ENCODE measurements at regions of chr2 and their contacts with region 1.

Region 1: DNA sequence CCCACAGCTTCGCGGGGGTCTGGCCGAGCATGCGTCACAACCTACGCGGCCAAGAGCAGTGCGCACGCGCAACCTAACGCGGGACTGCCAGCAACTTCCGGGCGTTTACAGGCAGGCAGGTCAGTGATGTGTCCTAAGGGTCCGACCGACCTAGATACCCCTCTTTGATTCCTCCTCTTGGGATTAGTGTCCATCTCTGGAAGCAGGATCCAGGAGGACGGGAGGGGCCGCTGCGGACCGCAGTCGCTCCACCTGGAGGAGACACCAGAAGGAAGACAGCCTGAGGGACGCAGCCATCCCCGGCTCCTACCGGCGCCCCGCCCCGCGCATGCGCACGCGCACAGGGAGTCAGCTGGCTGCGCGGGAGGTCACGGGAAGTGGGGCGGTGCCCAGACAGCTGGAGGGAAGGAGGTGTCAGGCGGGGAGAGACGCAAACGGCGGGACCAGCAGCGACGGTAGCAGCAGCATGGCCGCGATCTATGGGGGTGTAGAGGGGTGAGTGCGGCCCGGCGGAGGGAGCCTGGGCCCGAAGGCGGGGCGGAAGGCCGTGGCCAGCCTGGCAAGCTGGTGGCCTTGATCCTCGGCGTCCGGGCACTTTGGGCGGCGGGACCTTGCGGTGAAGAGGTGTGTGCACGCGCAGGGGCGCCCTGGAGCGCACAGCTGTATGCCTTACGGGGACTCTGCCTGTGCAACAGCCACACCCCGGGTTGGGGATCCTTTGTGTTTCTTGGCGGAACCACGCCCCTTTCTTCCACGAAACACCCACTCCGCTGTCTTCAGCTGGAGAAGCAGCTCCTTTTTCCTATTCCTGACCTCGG is at the start of gene NAGK:
- DNase-seq: peak; percentile 86 to 98
- H3K4me3 ChIP-seq: peak within 1 kb of the TSS; percentile 60 to 96 (median 82)
- H3K27ac ChIP-seq: peak within 1 kb of the TSS; percentile 78
- H3K4me1 ChIP-seq: peaks cover 0 to 6% (median 1%) of the 10 kb centered on the region in 4 experiments; a peak in 4 of 7 replicates
- H3K27me3 ChIP-seq: no peaks in the 10 kb centered on the region
- CTCF ChIP-seq: no peak
- EP300 ChIP-seq: peak in 1 of 2 experiments; percentile 3; a peak in 1 of 3 replicates
- POLR2A ChIP-seq: peak; percentile 85 to 98
- RAD21 ChIP-seq: no peak
- total RNA-seq, gene NAGK: 59.9 and 62.2 TPM in 2 replicates

Region 2: DNA sequence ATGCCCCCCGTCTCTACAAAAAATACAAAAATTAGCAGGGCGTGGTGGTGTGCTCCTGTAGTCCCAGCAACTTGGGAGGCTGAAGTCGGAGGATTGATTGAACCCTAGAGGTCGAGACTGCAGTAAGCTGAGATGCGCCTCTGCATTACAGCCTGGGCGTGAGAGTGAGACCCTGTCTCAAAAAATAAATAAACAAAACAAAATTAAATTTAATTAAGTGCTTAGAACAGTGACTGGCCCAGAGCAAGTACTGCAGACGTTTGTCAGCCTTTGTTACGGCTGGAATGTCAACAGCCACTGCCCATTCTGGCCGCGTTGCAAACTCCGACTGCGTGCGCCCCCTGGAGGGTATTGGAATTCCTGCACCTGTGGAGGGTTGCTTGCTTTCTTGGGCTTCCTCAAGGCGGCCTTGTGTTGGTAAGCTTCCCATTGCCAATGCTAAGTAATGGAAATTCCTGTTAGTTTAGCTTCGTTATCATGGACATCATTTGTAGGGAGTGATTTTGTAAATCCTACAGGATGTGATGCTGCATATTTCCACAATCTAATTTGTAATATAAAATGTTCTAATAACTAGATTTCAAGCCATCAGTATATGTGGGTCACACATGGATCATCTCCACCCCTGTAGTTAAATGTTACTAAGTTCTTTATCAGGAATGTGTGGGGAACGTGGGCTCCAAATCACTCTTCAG is 148.6 kb before region 1 on chr2:
- CTCF ChIA-PET with region 1: no interaction called
- POLR2A ChIA-PET with region 1: no interaction called
- DNase-seq: peak; percentile 79 to 99
- H3K4me3 ChIP-seq: no peak overlapping the region
- H3K27ac ChIP-seq: no peak overlapping the region
- H3K4me1 ChIP-seq: peaks cover 0 to 8% (median 3%) of the 10 kb centered on the region in 4 experiments; a peak in 4 of 7 replicates
- H3K27me3 ChIP-seq: peaks cover 0 to 4% (median 0%) of the 10 kb centered on the region in 4 experiments; a peak in 1 of 7 replicates
- CTCF ChIP-seq: peak; percentile 91 to 98 (median 96)
- EP300 ChIP-seq: no peak
- POLR2A ChIP-seq: no peak
- RAD21 ChIP-seq: peak; percentile 77 to 82

Region 3: DNA sequence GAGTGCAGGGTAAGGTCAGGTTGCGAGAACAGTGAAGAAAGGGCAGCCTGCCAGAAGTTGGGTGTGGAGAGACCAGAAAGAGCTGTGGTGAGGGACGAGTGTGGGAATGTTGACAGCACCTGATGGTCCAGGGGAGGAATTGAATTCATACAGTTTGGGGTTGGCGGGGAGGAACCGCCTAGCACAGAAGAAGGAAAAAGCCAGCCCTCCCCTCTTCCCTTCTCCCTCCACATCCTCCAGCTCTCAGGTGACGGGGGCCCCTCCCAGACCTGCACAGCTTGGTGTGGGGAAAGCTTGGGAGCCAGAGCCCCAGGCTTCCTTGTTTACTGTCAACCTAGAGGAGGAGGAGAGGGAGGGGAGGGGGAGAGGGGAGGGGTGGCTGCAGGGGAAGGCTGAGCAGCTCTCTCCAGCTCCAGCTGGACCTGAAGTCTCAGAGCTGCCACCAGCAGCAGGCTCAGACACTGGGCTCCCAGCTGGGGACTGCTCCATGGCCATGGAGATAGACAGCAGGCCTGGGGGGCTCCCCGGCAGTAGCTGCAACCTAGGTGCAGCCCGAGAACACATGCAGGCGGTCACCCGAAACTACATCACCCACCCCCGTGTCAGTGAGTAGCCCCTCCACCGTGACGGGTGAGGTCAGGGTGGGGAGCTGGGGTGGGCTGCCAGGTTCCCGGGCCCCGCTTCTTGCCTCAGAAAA is 132.8 kb before region 1 on chr2 and contains the start of gene ATP6V1B1:
- CTCF ChIA-PET with region 1: no interaction called
- POLR2A ChIA-PET with region 1: no interaction called
- DNase-seq: peak in 1 of 2 experiments; percentile 51
- H3K4me3 ChIP-seq: no peak within 1 kb of the TSS
- H3K27ac ChIP-seq: no peak within 1 kb of the TSS
- H3K4me1 ChIP-seq: peaks cover 7 to 41% (median 27%) of the 10 kb centered on the region in 4 experiments
- H3K27me3 ChIP-seq: peaks cover 3 to 31% (median 27%) of the 10 kb centered on the region in 4 experiments
- CTCF ChIP-seq: no peak
- EP300 ChIP-seq: no peak
- POLR2A ChIP-seq: no peak
- RAD21 ChIP-seq: no peak
- total RNA-seq, gene ATP6V1B1: not detected in 2 replicates

Region 4: GRCh38 chr2:70984576-70985282 is 83.7 kb before region 1 on chr2:
- CTCF ChIA-PET with region 1: interaction called, 27 read pairs
- POLR2A ChIA-PET with region 1: no interaction called
- DNase-seq: peak in 1 of 2 experiments; percentile 93
- H3K4me3 ChIP-seq: peak overlapping the region in 1 of 4 experiments; percentile 35; a peak in 2 of 8 replicates
- H3K27ac ChIP-seq: no peak overlapping the region
- H3K4me1 ChIP-seq: peaks cover 0 to 6% (median 4%) of the 10 kb centered on the region in 4 experiments; a peak in 4 of 7 replicates
- H3K27me3 ChIP-seq: peaks cover 0 to 4% (median 2%) of the 10 kb centered on the region in 4 experiments; a peak in 5 of 7 replicates
- CTCF ChIP-seq: peak; percentile 90 to 98 (median 91)
- EP300 ChIP-seq: no peak
- POLR2A ChIP-seq: no peak
- RAD21 ChIP-seq: peak; percentile 67 to 78

Region 5: DNA sequence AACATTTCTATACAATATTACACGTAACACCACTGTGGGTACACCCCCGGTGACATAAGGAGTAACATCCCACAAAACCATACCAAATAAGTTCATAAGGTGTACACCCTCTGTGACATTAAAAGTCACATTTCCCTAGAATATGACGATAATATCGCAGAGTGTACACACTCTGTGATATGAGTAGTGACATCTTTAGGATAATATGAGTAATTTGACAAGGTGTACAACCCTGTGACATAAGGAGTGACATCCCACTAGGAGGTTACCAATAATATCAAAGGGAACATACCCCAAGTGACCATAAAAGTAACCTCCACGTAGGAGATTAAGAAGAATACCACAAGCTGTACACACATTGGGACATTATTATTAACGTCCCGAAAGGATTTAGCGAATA is 49.8 kb before region 1 on chr2:
- CTCF ChIA-PET with region 1: interaction called, 10 read pairs
- POLR2A ChIA-PET with region 1: no interaction called
- DNase-seq: no peak
- H3K4me3 ChIP-seq: no peak overlapping the region
- H3K27ac ChIP-seq: no peak overlapping the region
- H3K4me1 ChIP-seq: no peaks in the 10 kb centered on the region
- H3K27me3 ChIP-seq: peaks cover 0 to 1% (median 0%) of the 10 kb centered on the region in 4 experiments; a peak in 1 of 7 replicates
- CTCF ChIP-seq: no peak
- EP300 ChIP-seq: no peak
- POLR2A ChIP-seq: no peak
- RAD21 ChIP-seq: no peak

Region 6: DNA sequence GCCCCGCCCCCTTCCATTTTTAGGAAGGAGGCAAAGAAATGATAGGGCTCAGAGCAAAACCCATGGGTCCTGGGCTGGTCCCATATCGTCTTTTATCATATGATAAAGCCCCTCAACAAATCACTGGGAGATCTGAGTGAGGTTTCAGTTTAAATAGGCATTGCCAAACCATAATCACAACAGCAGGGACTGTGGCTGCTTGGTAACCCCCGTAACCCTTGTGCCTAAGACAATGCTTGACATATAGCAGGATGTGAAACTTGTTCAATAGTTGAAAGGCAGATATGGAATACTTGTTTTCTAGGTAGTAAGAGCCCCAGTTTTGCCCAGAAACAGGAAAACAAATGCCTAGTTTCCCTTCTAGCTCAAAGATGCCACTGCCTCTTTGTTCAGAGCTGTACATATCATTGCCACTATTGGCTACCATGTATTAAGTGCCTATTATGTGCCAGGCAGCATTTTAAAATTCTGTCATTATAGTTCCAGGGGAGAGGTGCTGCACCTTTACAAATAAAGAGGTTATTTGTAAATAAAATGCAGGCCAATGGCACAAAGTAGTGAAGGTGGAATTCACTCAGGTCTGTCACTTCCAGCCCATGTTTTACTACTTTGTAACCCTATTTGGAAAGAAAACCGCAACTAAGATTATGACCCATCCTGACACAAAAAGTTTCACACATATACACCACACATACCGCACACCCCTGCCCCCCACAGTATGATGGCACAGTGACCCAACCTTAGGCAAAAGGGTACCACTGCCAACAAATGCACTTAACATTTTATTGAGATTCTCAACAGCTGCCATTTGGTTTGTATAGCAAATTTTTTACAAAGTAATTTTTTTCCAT is 14.2 kb after region 1 on chr2:
- CTCF ChIA-PET with region 1: interaction called, 13 read pairs
- POLR2A ChIA-PET with region 1: interaction called, 19 read pairs
- DNase-seq: no peak
- H3K4me3 ChIP-seq: no peak overlapping the region
- H3K27ac ChIP-seq: no peak overlapping the region
- H3K4me1 ChIP-seq: peaks cover 7 to 10% (median 7%) of the 10 kb centered on the region in 4 experiments
- H3K27me3 ChIP-seq: no peaks in the 10 kb centered on the region
- CTCF ChIP-seq: no peak
- EP300 ChIP-seq: no peak
- POLR2A ChIP-seq: no peak
- RAD21 ChIP-seq: no peak

Region 7: GRCh38 chr2:71150082-71150816 is 81.8 kb after region 1 on chr2:
- CTCF ChIA-PET with region 1: interaction called, 12 read pairs
- POLR2A ChIA-PET with region 1: interaction called, 3 read pairs
- DNase-seq: no peak
- H3K4me3 ChIP-seq: no peak overlapping the region
- H3K27ac ChIP-seq: no peak overlapping the region
- H3K4me1 ChIP-seq: no peaks in the 10 kb centered on the region
- H3K27me3 ChIP-seq: no peaks in the 10 kb centered on the region; a peak in 1 of 7 replicates
- CTCF ChIP-seq: peak in 1 of 3 experiments; percentile 29; a peak in 1 of 4 replicates
- EP300 ChIP-seq: no peak
- POLR2A ChIP-seq: no peak
- RAD21 ChIP-seq: no peak

Measured in H1 (cell line).